PC-3 (cell line): ENCODE measurements at regions of chr3 and their contacts with region 1.

Region 1: DNA sequence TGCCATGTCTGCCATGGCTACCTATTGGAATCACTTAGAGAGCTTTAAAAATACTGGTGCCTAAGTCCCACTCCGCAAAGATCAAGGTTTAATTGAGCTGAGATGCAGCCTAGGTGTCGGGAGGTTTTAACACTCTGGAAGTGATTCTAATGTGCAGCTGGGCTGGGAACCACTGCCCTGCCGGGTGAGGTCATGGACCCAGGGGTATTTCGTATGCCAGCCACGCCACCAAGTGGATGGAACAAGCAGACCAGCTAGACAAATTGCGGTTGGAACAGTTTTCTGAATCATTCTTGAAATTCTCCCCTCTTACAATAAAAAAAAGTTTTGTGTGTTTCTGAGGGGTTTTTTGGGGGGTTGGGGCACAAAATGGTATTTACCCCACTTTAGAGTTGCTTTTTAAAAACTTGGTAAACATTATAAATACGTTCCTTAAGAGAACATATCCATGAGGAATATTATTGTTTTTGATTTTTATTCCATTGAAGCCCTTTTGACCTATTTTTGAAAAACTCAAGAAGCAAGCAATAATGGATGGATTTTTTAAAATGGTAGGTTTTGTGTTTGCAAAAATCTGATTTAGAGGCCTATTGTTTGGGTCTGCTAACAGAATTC is 66.2 kb upstream of the CSTA start:
- DNase-seq: peak; percentile 81
- ATAC-seq: peak; percentile 88
- H3K4me3 ChIP-seq: no peak overlapping the region
- H3K27ac ChIP-seq: no peak overlapping the region
- H3K4me1 ChIP-seq: no peaks in the 10 kb centered on the region
- H3K27me3 ChIP-seq: peaks cover 51% of the 10 kb centered on the region
- CTCF ChIP-seq: peak; percentile 94

Region 2: DNA sequence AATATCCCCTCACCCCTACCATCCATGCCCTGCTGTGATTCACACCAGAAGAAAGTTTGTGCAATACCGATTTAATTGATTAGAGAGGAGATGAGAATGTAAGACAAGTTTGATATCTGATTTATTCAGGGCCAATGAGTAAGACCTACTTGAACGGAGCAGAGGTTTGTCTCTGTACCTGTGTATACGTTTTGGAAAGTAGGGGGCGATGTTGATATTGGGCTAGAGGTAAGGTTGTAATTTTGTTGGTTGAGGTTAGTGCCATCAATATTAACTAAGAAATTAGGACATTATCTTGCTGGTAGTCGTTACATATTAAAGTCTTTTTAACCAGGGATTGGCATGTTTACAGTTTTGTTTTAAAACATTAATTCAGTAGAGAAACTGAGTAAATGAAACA is 403.3 kb before region 1 on chr3:
- CTCF ChIA-PET with region 1: no interaction called
- POLR2A ChIA-PET with region 1: no interaction called
- intact Hi-C with region 1: loop called (anchors 5 kb)
- DNase-seq: peak; percentile 73
- ATAC-seq: peak; percentile 72
- H3K4me3 ChIP-seq: no peak overlapping the region
- H3K27ac ChIP-seq: no peak overlapping the region
- H3K4me1 ChIP-seq: no peaks in the 10 kb centered on the region
- H3K27me3 ChIP-seq: no peaks in the 10 kb centered on the region
- CTCF ChIP-seq: peak; percentile 84

Region 3: GRCh38 chr3:121979734-121980449 is 279.0 kb before region 1 on chr3:
- CTCF ChIA-PET with region 1: no interaction called
- POLR2A ChIA-PET with region 1: no interaction called
- intact Hi-C with region 1: loop called (anchors 2 kb)
- DNase-seq: peak; percentile 92
- ATAC-seq: peak; percentile 84
- H3K4me3 ChIP-seq: peak overlapping the region; percentile 30; the same call in 1 of the 2 replicates
- H3K27ac ChIP-seq: peak overlapping the region; percentile 84
- H3K4me1 ChIP-seq: peaks cover 47% of the 10 kb centered on the region
- H3K27me3 ChIP-seq: no peaks in the 10 kb centered on the region
- CTCF ChIP-seq: no peak

Region 4: GRCh38 chr3:122014741-122015140 is 244.1 kb before region 1 on chr3:
- CTCF ChIA-PET with region 1: no interaction called
- POLR2A ChIA-PET with region 1: no interaction called
- intact Hi-C with region 1: no loop called
- DNase-seq: no peak
- ATAC-seq: no peak
- H3K4me3 ChIP-seq: no peak overlapping the region
- H3K27ac ChIP-seq: no peak overlapping the region
- H3K4me1 ChIP-seq: no peaks in the 10 kb centered on the region
- H3K27me3 ChIP-seq: no peaks in the 10 kb centered on the region
- CTCF ChIP-seq: no peak

Region 5: GRCh38 chr3:122101646-122102045 is 157.2 kb before region 1 on chr3:
- CTCF ChIA-PET with region 1: interaction called, 4 read pairs
- POLR2A ChIA-PET with region 1: no interaction called
- intact Hi-C with region 1: loop called (anchors 1 kb)
- DNase-seq: peak; percentile 87
- ATAC-seq: peak; percentile 83
- H3K4me3 ChIP-seq: no peak overlapping the region
- H3K27ac ChIP-seq: no peak overlapping the region
- H3K4me1 ChIP-seq: no peaks in the 10 kb centered on the region
- H3K27me3 ChIP-seq: no peaks in the 10 kb centered on the region
- CTCF ChIP-seq: peak; percentile 85

Region 6: DNA sequence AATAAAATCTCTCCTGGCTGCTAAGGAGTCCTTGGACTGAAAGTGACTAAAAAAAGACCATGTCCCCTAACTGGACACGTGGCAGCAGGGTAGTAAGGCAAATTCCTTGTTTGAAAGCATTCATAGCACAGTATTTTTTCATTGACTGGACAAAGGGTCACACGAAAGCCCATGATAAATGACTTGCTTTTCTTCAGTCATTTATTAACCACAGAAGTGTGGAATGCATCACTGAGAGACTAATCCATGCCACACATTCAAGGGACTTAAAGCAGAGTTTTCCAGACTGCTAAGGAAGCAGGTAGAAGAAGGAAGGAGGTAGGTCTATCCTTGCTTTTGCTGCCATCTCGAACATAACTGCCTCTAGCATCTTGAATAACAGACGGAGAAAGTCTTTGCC is 44.2 kb before region 1 on chr3:
- CTCF ChIA-PET with region 1: no interaction called
- POLR2A ChIA-PET with region 1: no interaction called
- intact Hi-C with region 1: no loop called
- DNase-seq: no peak
- ATAC-seq: no peak
- H3K4me3 ChIP-seq: no peak overlapping the region
- H3K27ac ChIP-seq: no peak overlapping the region
- H3K4me1 ChIP-seq: no peaks in the 10 kb centered on the region
- H3K27me3 ChIP-seq: peaks cover 66% of the 10 kb centered on the region
- CTCF ChIP-seq: no peak